ENCODE measurements at regions of chr1 and their contacts with region 1.

Region 1: DNA sequence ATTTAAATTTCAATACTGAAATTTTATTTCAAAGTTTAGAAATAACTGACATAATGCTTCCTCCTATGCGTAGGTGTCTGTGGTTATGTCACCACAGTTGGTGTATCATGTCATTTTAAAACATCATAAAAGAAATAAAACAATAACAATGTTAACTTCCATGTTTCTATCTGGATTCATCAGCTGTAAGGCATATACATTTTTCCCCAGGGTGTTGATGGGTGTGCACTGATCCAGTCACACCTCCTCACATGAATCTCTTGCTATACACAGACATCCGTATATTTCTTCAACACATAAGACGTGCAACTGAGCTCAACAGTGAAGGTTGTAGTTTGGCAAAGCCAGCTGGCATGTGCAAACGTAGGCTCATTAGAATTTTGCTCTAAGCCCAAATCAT is 6.2 kb downstream of the KCNA3 start:
- DNase-seq: peak; percentile 48
- ATAC-seq: no peak
- H3K4me3 Mint-ChIP-seq: peak overlapping the region; percentile 68
- H3K27ac Mint-ChIP-seq: peak overlapping the region; percentile 80
- H3K4me1 Mint-ChIP-seq: peaks cover 41% of the 10 kb centered on the region
- H3K27me3 Mint-ChIP-seq: no peaks in the 10 kb centered on the region
- CTCF ChIP-seq: no peak

Region 2: GRCh38 chr1:110630839-110631663 is 37.5 kb before region 1 on chr1:
- CTCF ChIA-PET with region 1: interaction called, 13 read pairs
- POLR2A ChIA-PET with region 1: interaction called, 42 read pairs
- intact Hi-C with region 1: loop called (anchors 1 kb)
- DNase-seq: peak; percentile 89
- ATAC-seq: peak; percentile 69
- H3K4me3 Mint-ChIP-seq: no peak overlapping the region
- H3K27ac Mint-ChIP-seq: no peak overlapping the region
- H3K4me1 Mint-ChIP-seq: peaks cover 52% of the 10 kb centered on the region
- H3K27me3 Mint-ChIP-seq: no peaks in the 10 kb centered on the region
- CTCF ChIP-seq: peak; percentile 85

Measured in activated CD8-positive, alpha-beta T cell treated with anti-CD3 and anti-CD28 coated beads for 36 hours (primary cell).